ENCODE measurements at regions of chr6 and their contacts with region 1.

Region 1: GRCh38 chr6:132300323-132300949 is 100.8 kb downstream of the MOXD1 start:
- DNase-seq: no peak
- ATAC-seq: peak; percentile 98
- H3K4me3 Mint-ChIP-seq: no peak overlapping the region
- H3K27ac Mint-ChIP-seq: no peak overlapping the region
- H3K4me1 Mint-ChIP-seq: no peaks in the 10 kb centered on the region
- H3K27me3 Mint-ChIP-seq: no peaks in the 10 kb centered on the region
- CTCF ChIP-seq: peak; percentile 67

Region 2: DNA sequence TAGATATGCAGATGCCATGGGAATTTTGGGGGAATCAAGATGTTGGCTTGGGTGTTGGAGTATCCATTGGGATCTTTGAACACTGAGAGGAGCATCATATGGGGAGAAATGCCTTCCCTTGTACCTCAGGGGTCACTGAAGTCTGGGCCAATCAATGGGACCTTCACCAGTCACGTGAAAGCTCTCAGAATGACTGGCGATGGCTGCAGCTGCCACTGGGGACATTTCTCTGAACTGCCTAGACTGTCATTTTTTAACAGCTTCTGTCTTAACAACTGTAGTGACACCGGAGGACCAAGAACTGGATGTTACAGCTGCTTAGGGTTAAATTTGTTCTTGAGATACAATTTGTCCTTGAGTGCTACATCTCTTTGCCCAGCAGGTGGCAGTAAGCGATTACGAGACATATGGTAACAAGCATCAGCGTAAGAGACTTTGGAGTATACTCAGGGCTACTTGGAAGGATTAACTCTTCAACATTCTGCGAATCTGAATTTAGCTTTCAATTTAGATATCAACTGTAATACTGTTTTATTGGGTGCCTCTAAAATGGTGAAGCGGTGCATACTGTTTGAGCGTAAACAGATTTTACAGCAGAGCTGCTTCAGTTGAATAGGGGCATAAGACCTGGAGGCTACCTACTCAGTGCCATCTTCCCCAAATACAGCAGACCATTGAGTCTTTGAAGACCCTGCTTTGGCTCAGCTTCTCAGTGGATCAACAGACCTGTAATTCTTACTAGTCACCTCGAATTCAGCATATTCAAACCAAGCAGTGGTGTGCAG is 385.3 kb before region 1 on chr6:
- CTCF ChIA-PET with region 1: interaction called, 13 read pairs
- POLR2A ChIA-PET with region 1: no interaction called
- intact Hi-C with region 1: loop called (anchors 2 kb)
- DNase-seq: no peak
- ATAC-seq: peak; percentile 75
- H3K4me3 Mint-ChIP-seq: no peak overlapping the region
- H3K27ac Mint-ChIP-seq: no peak overlapping the region
- H3K4me1 Mint-ChIP-seq: peaks cover 26% of the 10 kb centered on the region
- H3K27me3 Mint-ChIP-seq: peaks cover 30% of the 10 kb centered on the region
- CTCF ChIP-seq: peak; percentile 29

Region 3: DNA sequence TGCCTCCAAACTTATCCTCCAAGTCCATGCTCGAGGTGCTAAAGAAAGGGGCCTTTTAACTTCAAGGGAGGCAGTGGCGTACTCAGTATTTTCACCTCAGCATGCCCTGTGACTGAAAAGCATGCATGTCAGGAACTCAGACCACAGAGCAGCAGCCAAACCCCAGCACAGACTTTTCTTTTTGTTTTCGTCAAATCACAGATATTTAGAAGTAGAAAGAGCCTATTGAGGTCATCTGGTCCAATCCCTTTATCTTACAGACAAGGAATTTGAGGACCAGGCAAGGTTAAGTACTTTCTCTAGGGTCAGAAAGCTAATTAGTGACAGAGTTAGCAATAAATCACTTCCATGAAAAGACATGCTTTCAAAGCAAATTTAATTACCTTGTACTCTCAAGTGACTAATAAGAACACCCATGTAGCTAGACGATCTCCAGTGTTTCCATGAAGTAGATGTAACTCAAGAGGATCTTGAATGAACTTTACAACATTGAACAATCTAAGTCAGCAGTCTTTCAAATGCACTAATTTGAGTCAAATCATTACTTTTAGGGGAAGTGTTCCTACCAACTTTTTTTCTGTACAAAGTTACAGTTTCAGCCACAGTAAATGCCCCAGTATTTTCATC is 65.0 kb after region 1 on chr6:
- CTCF ChIA-PET with region 1: interaction called, 11 read pairs
- POLR2A ChIA-PET with region 1: no interaction called
- intact Hi-C with region 1: loop called (anchors 1 kb)
- DNase-seq: no peak
- ATAC-seq: peak; percentile 83
- H3K4me3 Mint-ChIP-seq: peak overlapping the region; percentile 44
- H3K27ac Mint-ChIP-seq: peak overlapping the region; percentile 82
- H3K4me1 Mint-ChIP-seq: peaks cover 61% of the 10 kb centered on the region
- H3K27me3 Mint-ChIP-seq: no peaks in the 10 kb centered on the region
- CTCF ChIP-seq: no peak

Region 4: DNA sequence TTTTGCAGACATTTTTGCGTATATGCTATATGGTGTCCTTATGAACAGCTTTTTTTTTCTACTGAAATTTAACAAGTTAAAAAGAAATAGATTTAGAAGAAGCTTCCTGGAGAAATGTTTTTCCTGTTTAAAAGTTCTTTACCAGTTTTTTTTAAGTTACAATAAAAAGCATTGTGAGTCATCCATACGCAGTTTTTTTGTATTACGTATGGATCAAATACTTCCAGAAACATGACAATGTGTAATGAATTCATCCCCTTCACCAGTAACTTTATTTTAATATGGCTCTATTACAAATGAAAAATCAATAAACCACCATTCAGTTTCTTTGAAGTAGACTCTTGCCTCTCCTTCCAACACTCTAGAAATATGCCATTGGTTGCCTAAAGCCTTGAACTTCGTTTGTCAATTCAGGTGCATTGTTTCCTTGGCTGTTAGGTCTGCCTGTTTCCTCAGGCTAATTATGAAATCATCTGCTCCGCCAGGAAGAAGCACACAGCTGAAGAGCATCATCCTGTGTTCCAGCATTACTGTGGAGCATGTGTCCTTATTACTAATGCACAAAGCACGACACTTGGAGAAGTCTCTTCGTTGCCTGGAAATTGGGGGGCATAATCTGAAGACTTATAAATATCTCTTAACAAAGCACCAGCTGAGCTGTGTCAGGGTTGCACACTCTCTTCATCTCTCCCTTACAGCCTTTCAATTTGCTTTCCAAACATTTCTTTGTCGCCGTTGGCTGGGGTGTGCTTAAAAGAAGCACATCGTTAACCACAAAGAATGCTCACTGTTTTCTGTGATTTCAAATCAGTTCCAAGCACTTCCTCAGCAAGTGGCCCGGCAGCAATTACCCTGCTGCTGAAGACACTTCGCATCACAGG is 91.2 kb after region 1 on chr6:
- CTCF ChIA-PET with region 1: interaction called, 168 read pairs
- POLR2A ChIA-PET with region 1: interaction called, 3 read pairs
- intact Hi-C with region 1: loop called (anchors 1 kb)
- DNase-seq: no peak
- ATAC-seq: no peak
- H3K4me3 Mint-ChIP-seq: no peak overlapping the region
- H3K27ac Mint-ChIP-seq: no peak overlapping the region
- H3K4me1 Mint-ChIP-seq: peaks cover 29% of the 10 kb centered on the region
- H3K27me3 Mint-ChIP-seq: peaks cover 4% of the 10 kb centered on the region
- CTCF ChIP-seq: no peak

Region 5: DNA sequence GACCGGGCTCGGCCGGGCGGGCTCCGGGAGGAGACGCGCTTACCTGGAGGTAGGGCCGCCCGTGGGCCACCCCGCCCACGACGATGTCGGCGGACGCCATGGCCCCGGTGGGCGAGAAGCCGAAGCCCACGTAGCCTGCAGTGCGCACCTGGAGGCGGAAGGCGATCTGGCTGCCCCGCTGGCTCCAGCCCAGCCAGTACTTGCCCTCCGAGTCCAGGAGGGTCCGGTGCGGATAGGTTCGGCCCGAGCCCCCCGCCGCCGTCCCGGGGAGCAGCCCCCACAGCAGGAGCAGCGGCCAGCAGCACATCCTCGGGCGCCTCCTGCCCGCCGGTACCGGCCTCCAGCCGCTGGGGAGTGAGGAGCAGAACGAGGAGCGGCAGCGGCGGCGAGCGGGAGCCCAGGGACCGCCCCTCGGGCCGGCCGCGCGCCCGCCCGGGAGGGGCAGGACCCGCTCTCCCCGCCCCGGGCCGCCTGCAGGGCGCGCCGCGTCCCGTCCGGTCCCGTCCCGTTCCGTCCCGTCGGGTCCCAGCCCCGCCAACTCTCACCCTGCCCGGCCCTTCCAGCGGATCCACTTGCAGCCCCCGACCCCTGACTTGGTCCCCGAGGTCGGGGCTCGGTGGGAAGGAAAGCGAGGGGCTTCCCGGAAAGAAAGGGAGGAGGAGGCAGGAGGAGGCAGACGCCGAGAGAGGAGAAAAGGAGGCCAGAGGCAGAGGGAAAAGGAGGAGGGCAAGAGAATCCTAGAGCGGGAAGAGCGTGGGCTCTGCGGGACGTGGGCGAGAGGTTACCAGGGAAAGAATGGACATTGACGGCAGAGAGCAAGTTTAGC is 100.9 kb after region 1 on chr6 and contains the start of gene MOXD1:
- CTCF ChIA-PET with region 1: interaction called, 168 read pairs
- POLR2A ChIA-PET with region 1: no interaction called
- intact Hi-C with region 1: loop called (anchors 2 kb)
- DNase-seq: peak; percentile 61
- ATAC-seq: peak; percentile 77
- H3K4me3 Mint-ChIP-seq: peak within 1 kb of the TSS; percentile 88
- H3K27ac Mint-ChIP-seq: peak within 1 kb of the TSS; percentile 42
- H3K4me1 Mint-ChIP-seq: peaks cover 31% of the 10 kb centered on the region
- H3K27me3 Mint-ChIP-seq: peaks cover 7% of the 10 kb centered on the region
- CTCF ChIP-seq: no peak
- total RNA-seq, gene MOXD1: 3.2 and 3.7 TPM in 2 replicates

Region 6: GRCh38 chr6:132456700-132457143 is 156.3 kb after region 1 on chr6:
- CTCF ChIA-PET with region 1: interaction called, 11 read pairs
- POLR2A ChIA-PET with region 1: no interaction called
- intact Hi-C with region 1: no loop called
- DNase-seq: no peak
- ATAC-seq: peak; percentile 28
- H3K4me3 Mint-ChIP-seq: no peak overlapping the region
- H3K27ac Mint-ChIP-seq: peak overlapping the region; percentile 62
- H3K4me1 Mint-ChIP-seq: peaks cover 28% of the 10 kb centered on the region
- H3K27me3 Mint-ChIP-seq: no peaks in the 10 kb centered on the region
- CTCF ChIP-seq: no peak